ENCODE measurements at regions of chr12 and their contacts with region 1.

Region 1: GRCh38 chr12:1117970-1118563 is 127.0 kb downstream of the ERC1 start:
- DNase-seq: peak; percentile 63
- H3K4me3 ChIP-seq: no peak overlapping the region
- H3K27ac ChIP-seq: no peak overlapping the region
- H3K27me3 ChIP-seq: no peaks in the 10 kb centered on the region
- CTCF ChIP-seq: peak; percentile 93

Region 2: DNA sequence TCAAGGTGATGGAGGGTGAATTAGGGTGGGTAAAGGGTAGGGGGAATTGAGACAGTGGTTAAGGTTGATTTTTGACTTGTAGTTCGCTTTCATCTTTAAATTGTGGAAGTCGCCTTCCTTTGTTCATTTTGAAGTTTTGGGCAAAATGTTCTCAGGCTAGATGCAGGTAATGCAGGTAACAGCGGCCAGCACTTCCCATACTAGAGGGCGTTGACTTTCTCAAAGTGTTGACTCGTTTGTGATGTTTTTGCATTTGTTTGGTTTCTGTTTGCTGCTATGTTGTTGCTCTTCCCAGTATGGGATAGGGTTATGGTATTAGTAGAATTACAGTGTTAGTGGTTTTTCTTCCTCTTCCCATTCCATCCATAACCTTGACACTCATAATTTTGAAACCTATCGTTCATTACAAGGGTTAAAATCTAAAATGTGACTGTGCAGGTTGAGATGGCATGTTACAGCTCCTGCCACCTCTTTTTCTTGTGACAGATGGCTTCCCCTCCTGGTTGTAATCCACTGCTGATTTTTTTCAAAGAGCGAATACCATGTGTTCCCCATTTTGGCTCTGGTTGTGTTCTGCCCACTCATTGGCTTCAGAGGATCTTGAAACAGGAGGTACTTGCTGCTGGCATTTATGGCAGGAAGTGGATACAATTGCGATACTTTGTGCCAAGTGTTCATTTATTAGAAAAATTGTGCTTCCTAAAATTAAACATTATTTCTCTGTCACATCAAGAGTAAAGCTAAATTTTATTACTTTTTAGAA is 70.0 kb before region 1 on chr12:
- CTCF ChIA-PET with region 1: no interaction called
- POLR2A ChIA-PET with region 1: no interaction called
- DNase-seq: no peak
- H3K4me3 ChIP-seq: no peak overlapping the region
- H3K27ac ChIP-seq: no peak overlapping the region
- H3K27me3 ChIP-seq: no peaks in the 10 kb centered on the region
- CTCF ChIP-seq: no peak

Region 3: DNA sequence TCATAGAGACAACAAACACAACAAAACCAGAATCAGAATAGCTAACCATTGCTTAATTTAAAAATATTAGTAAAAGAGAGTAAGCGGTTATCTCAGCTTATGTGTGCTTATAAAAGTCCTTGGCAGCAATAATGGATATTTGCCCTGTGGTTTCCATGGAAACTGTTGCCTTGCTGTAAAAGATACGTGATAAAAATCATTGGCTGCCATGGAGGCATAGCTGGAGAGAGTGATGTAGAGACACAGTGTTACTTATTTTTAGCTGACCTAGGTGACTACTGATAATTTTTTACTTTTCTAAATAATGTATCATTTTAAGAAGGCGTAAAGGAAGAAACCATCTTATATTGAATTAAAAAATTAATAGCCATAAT is 34.2 kb before region 1 on chr12:
- CTCF ChIA-PET with region 1: no interaction called
- POLR2A ChIA-PET with region 1: no interaction called
- DNase-seq: peak; percentile 44
- H3K4me3 ChIP-seq: no peak overlapping the region
- H3K27ac ChIP-seq: no peak overlapping the region
- H3K27me3 ChIP-seq: no peaks in the 10 kb centered on the region
- CTCF ChIP-seq: no peak

Region 4: GRCh38 chr12:1171657-1172408 is 53.8 kb after region 1 on chr12:
- CTCF ChIA-PET with region 1: interaction called, 10 read pairs
- POLR2A ChIA-PET with region 1: no interaction called
- DNase-seq: no peak
- H3K4me3 ChIP-seq: no peak overlapping the region
- H3K27ac ChIP-seq: no peak overlapping the region
- H3K27me3 ChIP-seq: no peaks in the 10 kb centered on the region
- CTCF ChIP-seq: no peak

Region 5: GRCh38 chr12:1234073-1234472 is 116.0 kb after region 1 on chr12:
- CTCF ChIA-PET with region 1: interaction called, 10 read pairs
- POLR2A ChIA-PET with region 1: no interaction called
- DNase-seq: no peak
- H3K4me3 ChIP-seq: no peak overlapping the region
- H3K27ac ChIP-seq: no peak overlapping the region
- H3K27me3 ChIP-seq: no peaks in the 10 kb centered on the region
- CTCF ChIP-seq: no peak

Region 6: DNA sequence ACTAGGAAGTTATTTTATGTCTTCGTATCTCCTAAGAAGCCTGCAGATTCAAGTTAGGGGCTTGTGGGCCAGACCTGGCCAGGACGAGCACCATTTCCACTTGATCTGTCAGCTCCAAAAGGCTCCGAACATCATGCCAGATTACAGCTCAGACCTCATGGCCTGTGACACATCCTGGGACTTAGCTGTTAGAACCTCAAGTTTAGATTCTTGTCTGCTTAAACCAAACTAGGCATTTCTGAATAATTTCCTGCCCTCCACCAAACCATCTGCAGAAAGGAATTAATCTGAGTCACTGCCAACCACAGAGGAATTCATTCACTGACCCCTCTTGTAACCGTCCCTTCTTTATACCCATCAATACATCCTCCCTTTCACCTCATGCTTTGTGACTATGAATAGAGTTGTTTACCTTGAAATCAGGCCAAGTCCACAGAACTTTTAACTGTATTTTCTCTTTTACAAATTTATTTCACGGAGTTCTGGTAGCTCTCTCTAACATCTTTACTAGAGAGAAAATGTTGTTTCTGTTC is 356.0 kb after region 1 on chr12:
- CTCF ChIA-PET with region 1: interaction called, 22 read pairs
- POLR2A ChIA-PET with region 1: no interaction called
- DNase-seq: peak; percentile 92
- H3K4me3 ChIP-seq: peak overlapping the region; percentile 44
- H3K27ac ChIP-seq: peak overlapping the region; percentile 98
- H3K27me3 ChIP-seq: no peaks in the 10 kb centered on the region
- CTCF ChIP-seq: no peak

Region 7: DNA sequence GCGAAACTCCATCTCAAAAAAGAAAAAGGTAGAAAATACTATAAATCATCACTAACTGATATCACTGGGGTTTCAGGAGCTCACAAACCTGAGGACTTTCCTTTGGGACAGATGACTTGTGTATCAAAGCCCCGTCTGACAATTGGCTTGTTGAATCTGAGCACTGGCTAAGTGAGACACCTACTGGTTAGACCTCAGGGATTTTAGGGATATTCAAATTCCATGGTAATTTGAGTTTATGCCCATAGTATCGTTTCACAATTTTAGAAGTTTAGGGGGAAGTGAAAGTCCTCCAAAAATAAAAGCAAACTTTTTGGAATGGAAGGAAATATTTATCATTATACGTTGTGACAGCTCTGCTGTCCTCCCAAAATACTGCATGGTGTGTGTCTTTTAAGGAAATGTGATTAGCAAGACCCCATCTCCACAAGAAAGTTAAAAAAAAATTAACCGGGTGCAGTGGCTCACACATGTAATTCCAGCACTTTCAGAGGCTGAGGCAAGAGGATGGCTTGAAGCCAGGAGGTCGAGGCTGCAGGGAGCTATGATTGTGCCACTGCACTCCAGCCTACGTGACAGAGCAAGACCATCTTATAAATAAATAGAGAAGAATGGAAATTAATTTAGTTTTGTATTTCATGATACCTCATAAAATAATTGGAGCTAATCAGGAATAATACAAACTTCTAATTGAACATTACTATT is 427.1 kb after region 1 on chr12:
- CTCF ChIA-PET with region 1: interaction called, 16 read pairs
- POLR2A ChIA-PET with region 1: no interaction called
- DNase-seq: no peak
- H3K4me3 ChIP-seq: no peak overlapping the region
- H3K27ac ChIP-seq: no peak overlapping the region
- H3K27me3 ChIP-seq: no peaks in the 10 kb centered on the region
- CTCF ChIP-seq: peak; percentile 34

Region 8: GRCh38 chr12:1634590-1635191 is 516.6 kb after region 1 on chr12:
- CTCF ChIA-PET with region 1: interaction called, 25 read pairs
- POLR2A ChIA-PET with region 1: no interaction called
- DNase-seq: peak; percentile 49
- H3K4me3 ChIP-seq: no peak overlapping the region
- H3K27ac ChIP-seq: no peak overlapping the region
- H3K27me3 ChIP-seq: no peaks in the 10 kb centered on the region
- CTCF ChIP-seq: peak; percentile 92

Region 9: GRCh38 chr12:1680804-1681492 is 562.9 kb after region 1 on chr12:
- CTCF ChIA-PET with region 1: no interaction called
- POLR2A ChIA-PET with region 1: no interaction called
- DNase-seq: no peak
- H3K4me3 ChIP-seq: no peak overlapping the region
- H3K27ac ChIP-seq: no peak overlapping the region
- H3K27me3 ChIP-seq: no peaks in the 10 kb centered on the region
- CTCF ChIP-seq: no peak

Measured in AG04450 (cell line).